ENCODE measurements at regions of chr2 and their contacts with region 1.

Region 1: DNA sequence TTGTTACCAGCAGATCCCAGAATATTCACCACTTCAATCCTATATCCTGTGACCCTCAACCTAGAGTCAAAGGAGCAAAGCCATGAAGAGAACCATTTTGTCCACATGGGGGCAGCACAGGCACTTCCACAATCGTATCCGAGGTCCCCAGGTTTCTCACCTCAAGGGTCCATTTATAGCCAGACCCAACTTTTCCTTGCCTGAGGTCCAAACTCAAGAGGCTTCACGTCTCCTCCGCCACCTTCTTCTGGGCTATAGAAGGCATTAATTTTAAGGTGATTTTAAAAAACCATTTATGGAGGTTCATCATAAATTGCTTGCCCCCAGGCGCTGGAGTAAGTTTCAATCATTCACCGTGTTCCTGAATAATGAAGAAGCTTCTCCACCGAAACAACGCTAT is 111.6 kb upstream of the NABP1 start:
- DNase-seq: peak; percentile 29
- H3K4me3 ChIP-seq: no peak overlapping the region
- H3K27ac ChIP-seq: no peak overlapping the region
- H3K4me1 ChIP-seq: no peaks in the 10 kb centered on the region
- H3K27me3 ChIP-seq: no peaks in the 10 kb centered on the region
- CTCF ChIP-seq: peak in 3 of 4 experiments; percentile 44 to 61 (median 56)
- POLR2A ChIP-seq: no peak

Region 2: GRCh38 chr2:191688934-191689695 is 122.8 kb after region 1 on chr2:
- intact Hi-C with region 1: loop called (anchors 2 kb)
- DNase-seq: no peak
- H3K4me3 ChIP-seq: no peak overlapping the region
- H3K27ac ChIP-seq: no peak overlapping the region
- H3K4me1 ChIP-seq: no peaks in the 10 kb centered on the region
- H3K27me3 ChIP-seq: no peaks in the 10 kb centered on the region
- CTCF ChIP-seq: no peak
- POLR2A ChIP-seq: no peak

Region 3: GRCh38 chr2:192162392-192163042 is 596.2 kb after region 1 on chr2:
- intact Hi-C with region 1: loop called (anchors 10 kb)
- DNase-seq: peak; percentile 69
- H3K4me3 ChIP-seq: no peak overlapping the region
- H3K27ac ChIP-seq: no peak overlapping the region
- H3K4me1 ChIP-seq: peaks cover 6% of the 10 kb centered on the region
- H3K27me3 ChIP-seq: no peaks in the 10 kb centered on the region
- CTCF ChIP-seq: peak; percentile 88 to 97 (median 90)
- POLR2A ChIP-seq: no peak

Measured in prostate gland (tissue), 2 donors.